Cardiac septum (tissue), 1 donor: ENCODE measurements at regions of chr12 and their contacts with region 1.

Region 1: DNA sequence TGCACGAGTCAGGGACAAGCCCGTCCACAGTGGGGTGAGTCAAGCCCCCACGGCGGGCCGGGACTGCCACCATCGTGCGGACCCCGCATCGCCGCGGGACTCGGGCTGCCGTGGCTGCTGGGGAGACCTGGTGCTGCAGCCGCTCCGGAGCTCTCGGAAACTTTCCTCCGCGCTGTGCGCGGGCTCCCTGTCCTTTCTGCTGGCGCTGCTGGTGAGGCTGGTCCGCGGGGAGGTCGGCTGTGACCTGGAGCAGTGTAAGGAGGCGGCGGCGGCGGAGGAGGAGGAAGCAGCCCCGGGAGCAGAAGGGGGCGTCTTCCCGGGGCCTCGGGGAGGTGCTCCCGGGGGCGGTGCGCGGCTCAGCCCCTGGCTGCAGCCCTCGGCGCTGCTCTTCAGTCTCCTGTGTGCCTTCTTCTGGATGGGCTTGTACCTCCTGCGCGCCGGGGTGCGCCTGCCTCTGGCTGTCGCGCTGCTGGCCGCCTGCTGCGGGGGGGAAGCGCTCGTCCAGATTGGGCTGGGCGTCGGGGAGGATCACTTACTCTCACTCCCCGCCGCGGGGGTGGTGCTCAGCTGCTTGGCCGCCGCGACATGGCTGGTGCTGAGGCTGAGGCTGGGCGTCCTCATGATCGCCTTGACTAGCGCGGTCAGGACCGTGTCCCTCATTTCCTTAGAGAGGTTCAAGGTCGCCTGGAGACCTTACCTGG is 1.1 kb downstream of the PDE3A start:
- DNase-seq: peak; percentile 88

Region 2: DNA sequence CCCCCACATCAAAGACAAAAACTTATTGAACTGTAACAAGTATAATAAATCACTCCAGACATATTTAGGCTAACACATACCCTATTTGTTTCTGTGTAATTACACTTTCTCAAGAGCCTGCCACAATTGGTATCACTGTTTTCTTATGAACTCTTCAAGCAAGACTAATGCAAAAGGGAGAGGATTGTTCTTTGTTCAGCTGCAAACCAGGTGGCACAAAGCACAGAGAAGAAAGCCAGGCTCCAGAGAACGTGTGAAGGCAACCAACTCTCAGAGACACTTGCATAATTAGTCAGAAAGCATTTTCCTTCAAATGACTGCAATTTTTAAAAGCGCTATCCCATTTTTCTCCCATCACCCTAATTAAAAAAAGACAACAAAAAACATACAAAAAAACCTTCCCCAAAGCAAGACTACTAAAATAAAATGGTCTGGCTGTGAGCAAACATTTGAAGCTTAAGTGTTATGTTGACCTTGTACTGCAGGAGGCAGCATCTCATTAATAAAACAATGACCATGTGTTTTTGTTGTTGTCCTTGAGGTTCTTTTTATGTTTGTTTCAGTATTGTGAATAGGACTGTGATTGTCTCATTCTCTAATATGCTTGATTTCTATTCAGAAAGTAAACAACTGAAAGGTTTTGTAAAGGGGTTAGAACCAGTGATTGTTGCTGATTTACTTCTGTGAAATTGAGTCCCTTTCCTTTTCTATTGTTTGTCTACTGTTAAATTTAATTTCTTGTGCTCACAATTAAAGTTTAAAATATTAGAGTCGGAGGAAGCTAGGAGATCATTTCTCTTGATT is 453.9 kb before region 1 on chr12:
- intact Hi-C with region 1: loop called (anchors 5 kb)
- DNase-seq: no peak

Region 3: GRCh38 chr12:20212658-20213555 is 156.5 kb before region 1 on chr12:
- intact Hi-C with region 1: loop called (anchors 5 kb)
- DNase-seq: peak; percentile 89

Region 4: GRCh38 chr12:20445687-20446086 is 76.2 kb after region 1 on chr12:
- intact Hi-C with region 1: loop called (anchors 5 kb)
- DNase-seq: no peak